PC-3 (cell line): ENCODE measurements at regions of chr10 and their contacts with region 1.

Region 1: DNA sequence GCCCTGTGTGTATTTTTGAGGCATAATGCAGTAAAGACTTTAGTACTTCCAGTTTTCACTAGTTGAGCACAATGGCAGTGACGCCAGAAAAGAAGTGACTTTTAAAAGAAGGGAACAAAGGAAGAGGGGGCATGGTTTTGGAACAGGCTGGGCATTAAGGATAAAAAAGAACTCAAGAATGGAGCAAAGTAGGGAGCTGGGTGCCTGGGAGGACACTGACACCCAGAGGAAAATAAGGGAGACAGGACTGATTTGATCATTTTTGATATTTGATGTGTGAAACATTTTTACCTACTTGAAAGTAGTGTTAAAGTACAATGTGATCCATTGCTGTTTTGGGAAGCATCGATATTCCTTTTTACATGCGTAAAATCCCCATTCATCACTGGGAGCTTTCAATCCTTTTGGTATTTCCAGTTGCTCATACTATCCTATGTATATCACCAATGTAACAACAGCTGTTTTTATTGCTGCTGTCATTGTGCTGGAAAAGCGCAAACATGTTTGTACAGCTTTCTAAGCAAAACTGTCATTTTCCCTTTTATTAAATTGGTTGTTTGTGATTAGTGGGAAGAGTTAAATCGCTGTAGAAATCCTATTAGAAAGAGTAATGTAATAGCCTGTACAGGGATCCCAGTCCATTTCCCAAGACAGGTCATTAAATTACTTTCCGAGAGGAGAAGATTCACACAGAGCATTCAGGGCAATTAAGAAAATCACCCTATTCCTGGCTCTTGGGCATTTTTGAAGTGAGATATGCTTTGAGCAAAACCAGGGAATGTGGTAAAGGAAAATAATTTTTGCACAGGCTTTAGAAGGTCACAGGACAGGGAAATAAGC is 85.2 kb downstream of the ADAM12 start:
- DNase-seq: peak; percentile 4
- ATAC-seq: peak; percentile 38; the same call in 1 of the 2 replicates
- H3K4me3 ChIP-seq: no peak overlapping the region
- H3K27ac ChIP-seq: no peak overlapping the region
- H3K4me1 ChIP-seq: no peaks in the 10 kb centered on the region
- H3K27me3 ChIP-seq: no peaks in the 10 kb centered on the region
- CTCF ChIP-seq: peak; percentile 41

Region 2: DNA sequence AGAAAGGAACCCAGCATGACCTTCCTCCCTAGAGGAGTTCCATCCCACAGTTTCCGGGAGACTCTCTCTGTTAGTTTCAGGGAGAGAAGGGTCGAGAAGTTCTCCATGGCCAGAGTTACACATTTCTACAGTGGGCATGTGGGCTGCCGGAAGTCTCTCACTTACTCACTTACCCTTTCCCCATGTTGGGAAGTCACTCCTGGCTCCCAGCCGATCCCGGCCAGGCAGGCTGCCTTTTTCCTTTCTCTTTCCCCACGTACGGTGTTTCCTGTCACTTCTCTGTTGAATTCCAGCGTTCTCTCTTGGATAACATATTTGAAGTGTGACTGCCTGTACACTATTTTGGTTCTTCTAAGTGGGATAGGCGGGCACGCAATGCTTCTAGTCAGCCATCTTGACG is 623.6 kb before region 1 on chr10:
- CTCF ChIA-PET with region 1: no interaction called
- POLR2A ChIA-PET with region 1: no interaction called
- intact Hi-C with region 1: no loop called
- DNase-seq: no peak
- ATAC-seq: no peak
- H3K4me3 ChIP-seq: no peak overlapping the region
- H3K27ac ChIP-seq: no peak overlapping the region
- H3K4me1 ChIP-seq: no peaks in the 10 kb centered on the region
- H3K27me3 ChIP-seq: no peaks in the 10 kb centered on the region
- CTCF ChIP-seq: no peak

Region 3: DNA sequence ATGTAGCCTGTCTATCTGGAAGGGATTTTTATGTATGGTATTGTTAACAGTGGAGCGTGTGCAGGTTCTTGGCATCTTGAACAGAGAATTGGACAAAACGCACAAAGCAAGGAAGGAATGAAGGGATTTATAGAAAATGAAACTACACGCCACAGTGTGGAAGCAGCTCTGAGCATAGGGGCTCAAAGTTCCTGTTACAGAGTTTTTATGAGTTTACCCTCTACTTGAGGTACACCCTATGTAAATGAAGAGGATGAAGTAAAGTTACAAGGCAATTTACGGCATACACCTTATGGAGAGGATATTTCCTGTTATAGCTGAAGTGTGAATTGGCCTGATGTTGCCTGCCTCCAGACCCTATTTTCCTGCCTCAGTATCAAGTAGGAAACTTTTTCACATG is 373.4 kb before region 1 on chr10:
- CTCF ChIA-PET with region 1: interaction called, 10 read pairs
- POLR2A ChIA-PET with region 1: no interaction called
- intact Hi-C with region 1: loop called (anchors 5 kb)
- DNase-seq: no peak
- ATAC-seq: no peak
- H3K4me3 ChIP-seq: no peak overlapping the region
- H3K27ac ChIP-seq: no peak overlapping the region
- H3K4me1 ChIP-seq: peaks cover 5% of the 10 kb centered on the region; the same call in 1 of the 2 replicates
- H3K27me3 ChIP-seq: no peaks in the 10 kb centered on the region
- CTCF ChIP-seq: no peak

Region 4: DNA sequence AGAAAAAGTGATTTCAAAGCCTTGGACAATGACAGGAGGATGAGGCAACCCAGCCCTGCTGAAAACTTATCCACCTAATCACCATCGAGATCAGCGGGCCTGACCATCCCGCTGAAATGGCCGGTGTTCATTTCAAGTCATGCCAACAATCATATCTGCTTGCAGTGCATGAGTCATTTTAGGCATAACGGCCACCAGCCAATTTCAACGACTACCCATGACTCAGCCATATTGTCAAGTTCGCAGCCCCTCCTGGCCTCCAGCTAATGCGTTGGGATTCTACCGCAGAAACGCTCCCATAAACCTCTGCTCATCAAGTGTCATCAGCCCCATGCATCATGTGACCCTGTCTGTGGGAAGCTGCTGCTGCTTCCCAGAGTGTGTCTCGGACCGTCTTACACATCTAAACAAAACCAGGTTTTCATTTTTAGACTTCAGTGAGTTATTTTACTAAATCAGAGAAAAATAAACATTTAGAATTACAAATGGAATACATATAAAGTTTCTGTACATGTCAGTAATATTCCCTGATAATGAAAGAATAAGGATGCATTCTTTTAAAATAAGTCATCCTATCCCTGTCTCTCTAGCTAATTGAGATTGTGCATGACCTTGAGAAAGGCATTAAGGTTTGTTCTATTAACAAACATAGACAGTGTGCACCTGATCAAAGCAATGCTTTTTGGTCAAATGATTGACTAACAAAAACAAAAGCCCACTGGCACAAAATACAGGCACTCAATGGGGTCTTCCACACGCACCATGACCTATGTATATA is 103.6 kb before region 1 on chr10:
- CTCF ChIA-PET with region 1: no interaction called
- POLR2A ChIA-PET with region 1: no interaction called
- intact Hi-C with region 1: no loop called
- DNase-seq: peak; percentile 94
- ATAC-seq: peak; percentile 94
- H3K4me3 ChIP-seq: no peak overlapping the region
- H3K27ac ChIP-seq: peak overlapping the region; percentile 88
- H3K4me1 ChIP-seq: peaks cover 22% of the 10 kb centered on the region
- H3K27me3 ChIP-seq: no peaks in the 10 kb centered on the region
- CTCF ChIP-seq: no peak

Region 5: DNA sequence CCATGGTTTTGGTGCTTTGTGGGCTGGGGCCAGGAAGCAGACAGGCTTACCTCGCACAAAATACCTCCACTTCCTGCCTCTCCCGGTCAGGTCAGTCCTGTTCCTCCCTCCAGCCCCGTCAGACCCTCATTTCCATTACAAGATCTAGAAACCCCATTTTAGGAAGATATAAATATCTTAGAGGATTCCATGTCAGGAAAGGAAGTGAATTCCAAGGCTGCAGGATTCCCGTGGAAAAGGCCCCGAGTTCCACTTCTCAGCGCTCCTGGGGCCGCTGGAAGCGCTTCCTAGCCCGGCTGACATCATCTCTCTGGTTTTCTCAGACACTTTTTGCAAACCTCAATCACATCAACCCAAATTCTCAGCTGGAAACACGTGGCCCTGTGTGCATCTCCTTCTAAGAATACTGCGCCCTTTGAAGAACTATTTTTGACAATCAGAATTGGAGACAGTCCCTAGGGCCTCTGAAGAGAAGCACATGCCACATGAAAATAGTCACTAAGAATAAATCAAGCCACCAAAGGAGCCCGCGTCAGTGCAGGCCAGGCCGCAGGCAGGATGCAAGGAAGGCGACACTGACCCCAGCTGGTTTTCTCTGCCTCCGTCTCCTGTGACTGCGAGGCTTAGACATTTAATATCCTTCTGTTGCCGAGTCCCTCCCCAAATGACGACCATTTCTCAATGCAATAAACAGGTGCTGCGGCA is 173.0 kb after region 1 on chr10:
- CTCF ChIA-PET with region 1: no interaction called
- POLR2A ChIA-PET with region 1: no interaction called
- intact Hi-C with region 1: no loop called
- DNase-seq: no peak
- ATAC-seq: no peak
- H3K4me3 ChIP-seq: no peak overlapping the region
- H3K27ac ChIP-seq: no peak overlapping the region
- H3K4me1 ChIP-seq: peaks cover 5% of the 10 kb centered on the region
- H3K27me3 ChIP-seq: no peaks in the 10 kb centered on the region
- CTCF ChIP-seq: no peak